Natural killer cell (primary cell): ENCODE measurements at regions of chr10 and their contacts with region 1.

Region 1: GRCh38 chr10:69819716-69820506 is 18.2 kb downstream of the COL13A1 start:
- DNase-seq: no peak
- ATAC-seq: peak in 2 of 3 donors; percentile 11 to 14
- H3K4me3 ChIP-seq: peak overlapping the region; percentile 23
- H3K4me3 Mint-ChIP-seq: peak overlapping the region; percentile 88
- H3K27ac ChIP-seq: peak overlapping the region; percentile 46
- H3K27ac Mint-ChIP-seq: peak overlapping the region; percentile 89 to 97
- H3K4me1 ChIP-seq: peaks cover 81% of the 10 kb centered on the region
- H3K4me1 Mint-ChIP-seq: peaks cover 92 to 95% of the 10 kb centered on the region in 2 donors
- H3K27me3 ChIP-seq: no peaks in the 10 kb centered on the region
- H3K27me3 Mint-ChIP-seq: no peaks in the 10 kb centered on the region
- CTCF ChIP-seq: no peak

Region 2: GRCh38 chr10:69668721-69669120 is 151.2 kb before region 1 on chr10:
- intact Hi-C with region 1: no loop called
- DNase-seq: no peak
- ATAC-seq: no peak
- H3K4me3 ChIP-seq: no peak overlapping the region
- H3K4me3 Mint-ChIP-seq: no peak overlapping the region
- H3K27ac ChIP-seq: no peak overlapping the region
- H3K27ac Mint-ChIP-seq: no peak overlapping the region
- H3K4me1 ChIP-seq: no peaks in the 10 kb centered on the region
- H3K4me1 Mint-ChIP-seq: no peaks in the 10 kb centered on the region
- H3K27me3 ChIP-seq: no peaks in the 10 kb centered on the region
- H3K27me3 Mint-ChIP-seq: peaks cover 22 to 34% of the 10 kb centered on the region in 2 donors
- CTCF ChIP-seq: no peak

Region 3: DNA sequence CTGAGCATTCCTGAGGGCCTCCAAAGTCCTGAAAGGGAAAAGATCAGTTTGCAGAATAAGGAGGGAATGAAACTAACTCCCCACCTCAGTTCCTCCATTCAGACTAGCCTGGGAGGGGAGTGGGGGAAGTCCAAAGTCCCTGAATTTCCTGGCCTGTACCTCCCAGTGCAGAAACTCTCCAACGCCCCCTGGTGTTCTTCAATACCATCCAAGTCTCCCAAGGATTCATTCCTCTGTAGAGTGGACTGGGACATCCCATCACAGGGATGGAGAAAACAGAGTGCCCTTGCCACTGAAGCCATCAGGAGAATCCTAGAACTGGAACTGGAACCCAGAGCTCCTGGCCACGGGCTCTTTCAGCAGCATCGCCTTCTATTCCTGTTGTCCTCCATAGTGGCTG is 19.8 kb before region 1 on chr10:
- intact Hi-C with region 1: loop called (anchors 2 kb)
- DNase-seq: peak in 1 of 2 donors; percentile 16
- ATAC-seq: no peak
- H3K4me3 ChIP-seq: no peak overlapping the region
- H3K4me3 Mint-ChIP-seq: no peak overlapping the region
- H3K27ac ChIP-seq: no peak overlapping the region
- H3K27ac Mint-ChIP-seq: no peak overlapping the region
- H3K4me1 ChIP-seq: peaks cover 19% of the 10 kb centered on the region
- H3K4me1 Mint-ChIP-seq: peaks cover 26 to 42% of the 10 kb centered on the region in 2 donors
- H3K27me3 ChIP-seq: peaks cover 22% of the 10 kb centered on the region
- H3K27me3 Mint-ChIP-seq: peaks cover 7 to 15% of the 10 kb centered on the region in 2 donors
- CTCF ChIP-seq: no peak